ENCODE measurements at regions of chr10 and their contacts with region 1.

Region 1: GRCh38 chr10:99620713-99621453 is 644 bp upstream of the SLC25A28 start:
- DNase-seq: peak; percentile 94 to 96 (median 95)
- ATAC-seq: peak; percentile 78 to 91 (median 85)
- H3K4me3 ChIP-seq: peak overlapping the region; percentile 53 to 81 (median 80)
- H3K27ac ChIP-seq: peak overlapping the region; percentile 94 to 98 (median 97)
- H3K4me1 ChIP-seq: peaks cover 0 to 21% (median 9%) of the 10 kb centered on the region in 4 donors
- H3K27me3 ChIP-seq: no peaks in the 10 kb centered on the region
- CTCF ChIP-seq: peak in 2 of 4 donors; percentile 5 to 18
- POLR2A ChIP-seq: peak; percentile 76

Region 2: DNA sequence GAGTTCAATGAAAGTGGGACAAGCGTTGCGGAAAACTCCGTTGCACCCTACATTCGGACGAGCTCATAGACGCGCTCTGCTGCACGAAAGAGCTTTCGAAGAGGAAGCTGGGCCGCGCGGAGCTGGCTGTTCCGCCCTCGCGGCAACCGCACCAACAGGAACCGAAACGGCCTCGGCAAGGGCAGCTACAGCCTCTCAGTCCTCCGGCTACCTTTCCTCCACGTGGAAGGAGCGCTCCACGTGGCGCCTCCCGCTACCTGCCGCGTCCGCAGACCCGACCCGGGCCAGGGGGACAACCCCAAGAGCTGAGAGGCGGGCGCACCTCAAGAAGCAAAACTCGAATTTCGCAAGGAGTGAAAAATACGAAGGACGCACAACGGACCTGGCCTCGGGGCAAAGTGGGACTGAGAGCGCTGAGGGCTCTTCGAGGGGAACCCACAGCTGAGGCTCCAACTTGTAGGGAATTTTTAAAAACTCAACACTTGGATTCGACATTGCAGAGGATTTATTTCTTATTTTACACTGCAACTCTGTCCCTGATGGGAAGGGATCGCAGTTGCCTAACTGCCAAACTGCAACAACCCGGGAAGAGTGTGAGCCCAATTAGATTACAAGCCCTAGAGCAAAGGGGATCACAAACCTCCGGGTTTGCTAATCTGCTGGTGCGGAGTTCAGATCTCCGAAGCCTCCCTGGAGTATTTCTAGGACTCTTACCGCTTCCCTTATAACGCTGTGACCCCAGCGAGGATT is 386.7 kb before region 1 on chr10:
- intact Hi-C with region 1: no loop called
- DNase-seq: peak; percentile 55 to 75 (median 72)
- ATAC-seq: peak; percentile 81 to 92 (median 86)
- H3K4me3 ChIP-seq: peak overlapping the region; percentile 14 to 41 (median 34)
- H3K27ac ChIP-seq: no peak overlapping the region
- H3K4me1 ChIP-seq: peaks cover 0 to 21% (median 5%) of the 10 kb centered on the region in 4 donors
- H3K27me3 ChIP-seq: peaks cover 8 to 38% of the 10 kb centered on the region in 2 donors
- CTCF ChIP-seq: no peak
- POLR2A ChIP-seq: no peak

Region 3: DNA sequence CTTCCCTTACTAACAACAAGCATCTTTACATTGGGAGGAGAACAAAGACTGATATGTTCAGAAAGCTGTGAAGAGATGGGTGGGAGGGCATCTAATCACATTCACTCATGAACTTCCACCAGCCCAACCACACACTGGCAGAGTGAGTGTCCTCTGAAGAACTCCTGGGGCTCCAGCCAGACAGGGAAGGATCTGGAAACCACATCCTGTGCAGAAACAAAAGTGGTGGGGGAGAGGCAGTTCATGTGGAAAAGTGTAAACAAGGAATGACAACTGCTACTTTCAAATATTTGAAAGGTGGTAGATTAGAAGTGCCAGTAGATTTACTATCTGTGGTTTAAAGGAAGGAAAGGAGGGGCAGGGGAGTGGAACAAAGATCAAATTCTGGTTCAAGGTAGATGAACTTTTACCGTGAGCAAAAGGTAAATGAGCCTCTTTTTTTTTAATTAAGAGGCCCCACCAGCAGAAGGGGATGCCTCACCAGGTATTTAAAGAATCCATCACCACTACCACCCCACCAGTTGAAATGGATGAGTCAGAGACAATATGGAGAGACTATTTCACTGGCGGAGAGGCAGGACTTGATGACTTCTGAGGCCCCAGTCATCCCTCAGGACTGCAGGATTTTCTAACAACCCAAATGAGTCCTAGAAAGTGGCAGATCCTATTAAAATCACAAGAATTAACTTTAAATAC is 225.0 kb before region 1 on chr10:
- intact Hi-C with region 1: loop called in 1 of 2 experiments (anchors 10 kb)
- DNase-seq: peak in 2 of 3 donors; percentile 53 to 74
- ATAC-seq: peak; percentile 31 to 70 (median 58)
- H3K4me3 ChIP-seq: no peak overlapping the region
- H3K27ac ChIP-seq: peak overlapping the region in 2 of 3 donors; percentile 52 to 68
- H3K4me1 ChIP-seq: peaks cover 0 to 49% (median 16%) of the 10 kb centered on the region in 4 donors
- H3K27me3 ChIP-seq: no peaks in the 10 kb centered on the region
- CTCF ChIP-seq: no peak
- POLR2A ChIP-seq: no peak

Region 4: DNA sequence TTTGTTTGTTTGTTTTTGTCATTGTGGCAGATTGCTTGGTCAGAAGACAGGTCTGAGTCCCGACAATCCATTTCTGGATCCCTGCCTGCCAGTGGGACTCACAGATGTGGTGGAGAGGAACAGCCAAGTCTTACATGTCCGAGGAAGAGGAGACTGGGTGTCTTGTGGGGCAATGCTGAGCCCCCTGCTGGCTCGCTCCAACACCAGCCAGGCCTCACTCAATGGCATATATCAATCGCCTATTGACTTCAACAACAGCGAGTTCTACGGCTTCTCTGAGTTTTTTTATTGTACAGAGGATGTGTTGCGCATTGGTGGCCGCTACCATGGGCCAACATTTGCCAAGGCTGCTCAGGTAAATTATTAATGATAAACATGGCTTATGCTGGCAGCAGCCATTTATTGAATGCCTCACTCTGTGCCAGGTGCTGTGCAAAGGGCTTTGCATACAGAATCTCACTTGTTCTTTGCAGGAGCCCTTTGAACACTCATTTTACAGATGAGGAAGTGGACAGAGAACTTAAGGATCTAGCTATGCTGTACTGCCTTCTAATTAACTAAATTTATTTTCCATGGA is 77.7 kb after region 1 on chr10:
- intact Hi-C with region 1: loop called in 1 of 2 experiments (anchors 10 kb)
- DNase-seq: peak in 2 of 3 donors; percentile 27 to 68
- ATAC-seq: peak; percentile 50 to 84 (median 62)
- H3K4me3 ChIP-seq: no peak overlapping the region
- H3K27ac ChIP-seq: no peak overlapping the region
- H3K4me1 ChIP-seq: peaks cover 0 to 7% (median 2%) of the 10 kb centered on the region in 4 donors
- H3K27me3 ChIP-seq: no peaks in the 10 kb centered on the region
- CTCF ChIP-seq: peak in 2 of 4 donors; percentile 8 to 12
- POLR2A ChIP-seq: no peak

Region 5: GRCh38 chr10:99711129-99711719 is 90.3 kb after region 1 on chr10:
- intact Hi-C with region 1: loop called in 1 of 2 experiments (anchors 10 kb)
- DNase-seq: no peak
- ATAC-seq: peak; percentile 77 to 91 (median 85)
- H3K4me3 ChIP-seq: no peak overlapping the region
- H3K27ac ChIP-seq: no peak overlapping the region
- H3K4me1 ChIP-seq: no peaks in the 10 kb centered on the region
- H3K27me3 ChIP-seq: no peaks in the 10 kb centered on the region
- CTCF ChIP-seq: peak; percentile 50 to 68 (median 54)
- POLR2A ChIP-seq: no peak